GM12878 (cell line): ENCODE measurements at regions of chr6 and their contacts with region 1.

Region 1: DNA sequence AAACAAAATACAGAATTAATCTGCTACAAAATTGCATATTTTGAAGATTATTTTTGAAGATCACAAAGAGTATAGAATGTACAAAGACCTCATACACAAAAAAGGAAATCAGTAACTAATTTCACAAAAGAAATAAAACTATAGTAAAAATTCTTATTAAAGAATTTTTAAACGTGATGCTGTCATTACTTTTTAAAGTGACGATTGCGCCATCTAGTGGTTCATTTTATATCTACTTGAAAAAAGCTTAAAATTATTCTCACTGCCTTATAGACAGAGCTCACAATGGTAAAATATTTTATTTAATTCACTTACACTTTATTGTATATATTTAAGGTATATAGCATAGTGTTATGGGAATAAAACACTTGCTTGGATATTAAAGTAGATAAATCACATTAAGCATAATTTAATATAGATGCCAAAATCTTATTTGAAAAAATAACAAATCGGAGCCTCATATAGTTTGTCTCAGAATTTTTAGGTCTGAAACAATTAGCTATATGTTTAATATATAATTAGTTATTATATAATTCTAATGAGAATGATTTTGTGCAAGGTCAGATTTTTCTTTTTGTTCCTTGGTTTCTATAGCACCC is 128.8 kb downstream of the PHF3 start:
- DNase-seq: peak; percentile 5
- ATAC-seq: peak; percentile 64
- H3K4me3 ChIP-seq: no peak overlapping the region
- H3K27ac ChIP-seq: no peak overlapping the region
- H3K4me1 ChIP-seq: no peaks in the 10 kb centered on the region
- H3K27me3 ChIP-seq: no peaks in the 10 kb centered on the region
- CTCF ChIP-seq: no peak; a peak in 2 of 6 replicates
- EP300 ChIP-seq: no peak
- POLR2A ChIP-seq: no peak
- RAD21 ChIP-seq: peak; percentile 63

Region 2: DNA sequence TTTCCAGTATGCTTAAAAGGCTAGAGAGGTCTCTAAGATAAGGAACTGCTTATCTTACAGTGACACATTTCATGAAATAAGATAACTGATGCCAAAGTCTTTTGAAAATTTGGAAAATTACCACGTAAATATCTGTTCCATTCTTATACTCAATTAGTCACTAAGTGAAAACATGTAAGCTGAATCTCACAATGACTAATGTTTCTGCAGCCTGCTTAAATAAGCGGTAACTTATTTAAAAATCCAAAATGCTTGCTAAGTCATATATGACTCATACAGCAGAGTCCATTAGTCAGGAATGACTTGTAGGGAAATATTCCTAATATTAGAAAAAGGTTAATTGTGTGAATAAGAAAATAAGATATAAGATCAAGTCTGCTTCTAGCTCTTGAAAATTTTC is 416.8 kb before region 1 on chr6:
- CTCF ChIA-PET with region 1: interaction called, 159 read pairs
- POLR2A ChIA-PET with region 1: interaction called, 4 read pairs
- RAD21 ChIA-PET with region 1: interaction called, 114 read pairs
- SMC1A ChIA-PET with region 1: interaction called, 218 read pairs
- in situ Hi-C with region 1: loop called (anchors 5 kb)
- intact Hi-C with region 1: loop called (anchors 1 kb)
- DNase-seq: no peak
- ATAC-seq: peak; percentile 25
- H3K4me3 ChIP-seq: no peak overlapping the region
- H3K27ac ChIP-seq: no peak overlapping the region
- H3K4me1 ChIP-seq: peaks cover 11% of the 10 kb centered on the region
- H3K27me3 ChIP-seq: no peaks in the 10 kb centered on the region
- CTCF ChIP-seq: no peak
- EP300 ChIP-seq: no peak
- POLR2A ChIP-seq: no peak
- RAD21 ChIP-seq: no peak

Region 3: GRCh38 chr6:63783096-63783495 is 18.7 kb after region 1 on chr6:
- CTCF ChIA-PET with region 1: interaction called, 8 read pairs
- POLR2A ChIA-PET with region 1: interaction called, 3 read pairs
- RAD21 ChIA-PET with region 1: interaction called, 9 read pairs
- SMC1A ChIA-PET with region 1: interaction called, 14 read pairs
- in situ Hi-C with region 1: no loop called
- intact Hi-C with region 1: no loop called
- DNase-seq: no peak
- ATAC-seq: peak; percentile 39
- H3K4me3 ChIP-seq: no peak overlapping the region
- H3K27ac ChIP-seq: no peak overlapping the region
- H3K4me1 ChIP-seq: peaks cover 8% of the 10 kb centered on the region
- H3K27me3 ChIP-seq: no peaks in the 10 kb centered on the region
- CTCF ChIP-seq: no peak
- EP300 ChIP-seq: no peak
- POLR2A ChIP-seq: no peak
- RAD21 ChIP-seq: no peak